Naive thymus-derived CD4-positive, alpha-beta T cell (primary cell): ENCODE measurements at regions of chr9 and their contacts with region 1.

Region 1: GRCh38 chr9:74277532-74277931 is 219.6 kb upstream of the RORB start:
- DNase-seq: peak in 2 of 9 donors; percentile 4 to 50
- ATAC-seq: no peak
- H3K4me3 ChIP-seq: no peak overlapping the region
- H3K4me3 Mint-ChIP-seq: peak overlapping the region in 2 of 10 donors; percentile 47 to 56
- H3K27ac ChIP-seq: no peak overlapping the region
- H3K27ac Mint-ChIP-seq: peak overlapping the region in 1 of 9 donors; percentile 35
- H3K4me1 ChIP-seq: no peaks in the 10 kb centered on the region
- H3K4me1 Mint-ChIP-seq: peaks cover 0 to 21% (median 0%) of the 10 kb centered on the region in 7 donors
- H3K27me3 ChIP-seq: no peaks in the 10 kb centered on the region
- H3K27me3 Mint-ChIP-seq: peaks cover 0 to under 1% (median 0%) of the 10 kb centered on the region in 5 donors

Region 2: GRCh38 chr9:74245866-74246497 is 31.6 kb before region 1 on chr9:
- CTCF ChIA-PET with region 1: no interaction called
- POLR2A ChIA-PET with region 1: no interaction called
- intact Hi-C with region 1: loop called in 1 of 2 experiments (anchors 1 kb)
- DNase-seq: peak in 2 of 9 donors; percentile 1 to 24
- ATAC-seq: no peak
- H3K4me3 ChIP-seq: no peak overlapping the region
- H3K4me3 Mint-ChIP-seq: peak overlapping the region in 1 of 10 donors; percentile 52
- H3K27ac ChIP-seq: no peak overlapping the region
- H3K27ac Mint-ChIP-seq: peak overlapping the region in 1 of 9 donors; percentile 85
- H3K4me1 ChIP-seq: no peaks in the 10 kb centered on the region
- H3K4me1 Mint-ChIP-seq: peaks cover 0 to 17% (median 0%) of the 10 kb centered on the region in 7 donors
- H3K27me3 ChIP-seq: no peaks in the 10 kb centered on the region
- H3K27me3 Mint-ChIP-seq: no peaks in the 10 kb centered on the region

Region 3: DNA sequence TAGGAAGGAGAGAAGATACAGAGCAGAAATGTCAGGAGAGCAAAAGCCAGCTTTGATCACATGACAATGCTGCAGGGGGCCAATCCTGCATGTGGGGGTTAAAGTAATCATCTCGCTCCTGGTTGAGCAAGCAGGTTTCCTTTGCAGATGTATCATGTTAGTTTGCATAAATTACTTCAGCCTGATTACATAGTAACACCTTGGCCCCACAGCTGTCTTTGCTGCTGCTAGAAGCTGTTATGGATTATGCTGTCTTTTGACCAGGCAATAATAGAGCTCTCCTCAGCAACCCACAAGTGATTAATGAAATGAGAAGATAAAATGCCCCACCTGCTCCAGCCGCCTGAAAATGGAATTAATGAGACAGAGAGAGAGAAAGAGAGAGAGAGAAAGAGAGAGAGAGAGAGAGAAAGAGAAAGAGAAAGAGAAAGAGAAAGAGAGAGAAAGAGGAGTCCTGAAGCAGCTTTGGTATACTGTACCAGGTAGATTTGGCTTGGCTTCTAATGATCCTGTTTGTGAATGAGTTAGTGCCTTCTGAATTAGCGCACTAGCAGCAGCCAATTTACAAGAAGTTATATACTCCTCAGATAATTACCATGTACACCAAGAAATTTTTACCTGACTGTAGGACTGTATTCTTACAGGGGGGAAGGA is 45.3 kb after region 1 on chr9:
- CTCF ChIA-PET with region 1: no interaction called
- POLR2A ChIA-PET with region 1: no interaction called
- intact Hi-C with region 1: loop called in 1 of 2 experiments (anchors 2 kb)
- DNase-seq: no peak
- ATAC-seq: no peak
- H3K4me3 ChIP-seq: no peak overlapping the region
- H3K4me3 Mint-ChIP-seq: peak overlapping the region in 2 of 10 donors; percentile 36 to 76
- H3K27ac ChIP-seq: no peak overlapping the region
- H3K27ac Mint-ChIP-seq: peak overlapping the region in 2 of 9 donors; percentile 26 to 81
- H3K4me1 ChIP-seq: no peaks in the 10 kb centered on the region
- H3K4me1 Mint-ChIP-seq: peaks cover 0 to 10% (median 0%) of the 10 kb centered on the region in 7 donors
- H3K27me3 ChIP-seq: no peaks in the 10 kb centered on the region
- H3K27me3 Mint-ChIP-seq: peaks cover 0 to 9% (median 0%) of the 10 kb centered on the region in 5 donors

Region 4: GRCh38 chr9:74666625-74667316 is 389.2 kb after region 1 on chr9:
- CTCF ChIA-PET with region 1: no interaction called
- POLR2A ChIA-PET with region 1: no interaction called
- intact Hi-C with region 1: no loop called
- DNase-seq: no peak
- ATAC-seq: no peak
- H3K4me3 ChIP-seq: no peak overlapping the region
- H3K4me3 Mint-ChIP-seq: no peak overlapping the region
- H3K27ac ChIP-seq: no peak overlapping the region
- H3K27ac Mint-ChIP-seq: no peak overlapping the region
- H3K4me1 ChIP-seq: no peaks in the 10 kb centered on the region
- H3K4me1 Mint-ChIP-seq: no peaks in the 10 kb centered on the region
- H3K27me3 ChIP-seq: no peaks in the 10 kb centered on the region
- H3K27me3 Mint-ChIP-seq: peaks cover 3 to 17% (median 6%) of the 10 kb centered on the region in 5 donors